ENCODE measurements at regions of chr10 and their contacts with region 1.

Region 1: DNA sequence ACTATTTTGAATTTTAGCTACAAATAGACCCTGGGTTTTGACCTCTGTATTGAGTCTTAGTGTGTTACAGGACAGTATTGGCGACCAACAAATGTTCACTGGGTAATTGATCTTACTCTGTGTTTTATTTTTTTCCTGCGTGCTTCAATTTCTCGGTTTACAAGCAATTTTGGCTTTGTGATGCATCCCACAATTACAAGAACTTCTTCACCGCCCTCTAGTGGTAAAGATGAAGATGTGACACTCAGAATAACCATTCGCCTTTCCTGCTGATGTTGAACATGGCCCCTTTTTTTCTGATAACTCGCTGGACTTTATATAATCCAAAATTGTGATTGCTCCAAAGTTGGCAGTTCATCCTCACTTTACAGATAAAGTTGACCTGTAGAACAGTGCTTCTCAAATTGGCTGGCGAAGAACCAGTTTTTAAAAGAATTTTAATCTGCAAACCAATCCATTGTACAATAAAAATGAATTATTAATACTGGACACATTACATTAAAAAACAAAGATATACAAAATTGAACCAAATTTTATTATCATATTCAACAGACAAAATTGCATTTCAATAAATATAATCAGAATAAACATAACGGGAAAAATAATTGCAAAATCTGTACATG is 20.2 kb upstream of the SMC3 start:
- DNase-seq: peak; percentile 14
- H3K4me3 ChIP-seq: no peak overlapping the region
- H3K27ac ChIP-seq: no peak overlapping the region
- H3K4me1 ChIP-seq: peaks cover 0 to 5% (median 0%) of the 10 kb centered on the region in 4 donors
- H3K27me3 ChIP-seq: peaks cover 0 to 2% (median 0%) of the 10 kb centered on the region in 4 donors
- CTCF ChIP-seq: peak; percentile 76 to 82 (median 76)
- EP300 ChIP-seq: no peak
- POLR2A ChIP-seq: no peak

Region 2: GRCh38 chr10:110311357-110311949 is 235.8 kb before region 1 on chr10:
- intact Hi-C with region 1: loop called (anchors 2 kb)
- DNase-seq: no peak
- H3K4me3 ChIP-seq: no peak overlapping the region
- H3K27ac ChIP-seq: no peak overlapping the region
- H3K4me1 ChIP-seq: peaks cover 0 to 6% (median under 1%) of the 10 kb centered on the region in 4 donors
- H3K27me3 ChIP-seq: no peaks in the 10 kb centered on the region
- CTCF ChIP-seq: peak; percentile 64 to 75 (median 68)
- EP300 ChIP-seq: no peak
- POLR2A ChIP-seq: no peak